PC-9 (cell line): ENCODE measurements at regions of chr5 and their contacts with region 1.

Region 1: GRCh38 chr5:40628407-40628806 is 51.3 kb upstream of the PTGER4 start:
- DNase-seq: peak in 1 of 2 experiments; percentile 12
- H3K4me3 ChIP-seq: no peak overlapping the region
- H3K27ac ChIP-seq: no peak overlapping the region
- H3K4me1 ChIP-seq: no peaks in the 10 kb centered on the region
- H3K27me3 ChIP-seq: no peaks in the 10 kb centered on the region
- CTCF ChIP-seq: no peak

Region 2: GRCh38 chr5:40367255-40367654 is 261.2 kb before region 1 on chr5:
- CTCF ChIA-PET with region 1: no interaction called
- POLR2A ChIA-PET with region 1: interaction called, 10 read pairs
- intact Hi-C with region 1: no loop called
- DNase-seq: no peak
- H3K4me3 ChIP-seq: no peak overlapping the region
- H3K27ac ChIP-seq: no peak overlapping the region
- H3K4me1 ChIP-seq: no peaks in the 10 kb centered on the region
- H3K27me3 ChIP-seq: no peaks in the 10 kb centered on the region
- CTCF ChIP-seq: no peak

Region 3: DNA sequence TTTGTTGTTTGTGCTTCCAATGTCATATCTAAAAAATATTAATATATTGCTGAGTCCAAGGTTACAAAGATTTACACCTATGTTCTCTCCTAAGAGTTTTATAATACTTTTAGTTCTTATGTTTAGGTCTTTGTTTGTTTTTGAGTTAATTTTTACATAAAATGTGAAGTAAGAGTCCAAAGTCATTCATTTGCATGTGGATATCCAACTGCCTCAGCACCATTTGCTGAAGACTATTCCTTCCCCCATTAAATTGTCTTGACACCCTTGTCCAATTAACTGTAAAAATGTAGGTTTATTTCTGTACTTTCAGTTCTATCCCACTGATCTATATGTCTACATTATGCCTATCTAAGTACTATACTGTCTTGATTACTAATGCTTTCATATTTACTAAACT is 91.7 kb after region 1 on chr5:
- CTCF ChIA-PET with region 1: no interaction called
- POLR2A ChIA-PET with region 1: no interaction called
- intact Hi-C with region 1: no loop called
- DNase-seq: no peak
- H3K4me3 ChIP-seq: no peak overlapping the region
- H3K27ac ChIP-seq: no peak overlapping the region
- H3K4me1 ChIP-seq: peaks cover 14% of the 10 kb centered on the region
- H3K27me3 ChIP-seq: no peaks in the 10 kb centered on the region
- CTCF ChIP-seq: no peak

Region 4: GRCh38 chr5:41924872-41925554 is 1296.6 kb after region 1 on chr5 and contains the start of gene FBXO4:
- CTCF ChIA-PET with region 1: no interaction called
- POLR2A ChIA-PET with region 1: no interaction called
- intact Hi-C with region 1: no loop called
- DNase-seq: peak; percentile 71 to 92
- H3K4me3 ChIP-seq: peak within 1 kb of the TSS; percentile 86
- H3K27ac ChIP-seq: peak within 1 kb of the TSS; percentile 18
- H3K4me1 ChIP-seq: peaks cover 23% of the 10 kb centered on the region
- H3K27me3 ChIP-seq: no peaks in the 10 kb centered on the region
- CTCF ChIP-seq: no peak; the same call in 1 of the 2 replicates
- total RNA-seq, gene FBXO4: 27.8 and 30.4 TPM in 2 replicates

Region 5: GRCh38 chr5:42268630-42269029 is 1640.2 kb after region 1 on chr5:
- CTCF ChIA-PET with region 1: no interaction called
- POLR2A ChIA-PET with region 1: no interaction called
- intact Hi-C with region 1: no loop called
- DNase-seq: no peak
- H3K4me3 ChIP-seq: no peak overlapping the region
- H3K27ac ChIP-seq: no peak overlapping the region
- H3K4me1 ChIP-seq: no peaks in the 10 kb centered on the region
- H3K27me3 ChIP-seq: no peaks in the 10 kb centered on the region
- CTCF ChIP-seq: no peak